Right ventricle myocardium inferior (tissue), 1 donor: ENCODE measurements at regions of chr1 and their contacts with region 1.

Region 1: GRCh38 chr1:168613691-168614231 is 37.4 kb downstream of the XCL1 start:
- DNase-seq: no peak
- ATAC-seq: peak; percentile 86

Region 2: DNA sequence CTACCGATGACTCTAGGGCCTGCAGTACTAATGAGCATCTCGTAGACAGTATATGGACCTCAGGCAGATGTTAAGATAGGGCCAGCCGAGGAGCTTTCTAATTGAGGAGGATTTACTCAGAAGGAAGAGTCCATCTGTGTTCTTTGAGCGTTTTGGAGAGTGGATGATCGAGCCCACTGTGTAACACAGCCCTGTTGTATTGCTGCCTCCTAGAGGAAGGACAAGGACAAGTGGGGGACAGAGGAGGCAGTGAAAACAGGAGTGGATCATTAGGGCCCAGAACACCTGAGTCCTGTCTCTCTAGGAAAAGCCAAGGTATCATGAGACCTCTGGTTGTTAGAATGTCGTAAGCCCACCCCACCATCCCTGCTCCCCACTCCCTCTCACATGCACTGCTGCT is 270.2 kb before region 1 on chr1:
- intact Hi-C with region 1: no loop called
- DNase-seq: no peak
- ATAC-seq: peak; percentile 30

Region 3: GRCh38 chr1:169133801-169134502 is 520.2 kb after region 1 on chr1:
- intact Hi-C with region 1: loop called (anchors 5 kb)
- DNase-seq: no peak
- ATAC-seq: no peak